MCF 10A (cell line): ENCODE measurements at regions of chr5 and their contacts with region 1.

Region 1: GRCh38 chr5:2685651-2686272 is 65.7 kb downstream of the IRX2 start:
- DNase-seq: peak; percentile 96
- H3K4me3 Mint-ChIP-seq: peak overlapping the region; percentile 57
- H3K27ac Mint-ChIP-seq: peak overlapping the region; percentile 92
- H3K4me1 Mint-ChIP-seq: peaks cover 51% of the 10 kb centered on the region
- H3K27me3 Mint-ChIP-seq: no peaks in the 10 kb centered on the region
- CTCF ChIP-seq: no peak

Region 2: DNA sequence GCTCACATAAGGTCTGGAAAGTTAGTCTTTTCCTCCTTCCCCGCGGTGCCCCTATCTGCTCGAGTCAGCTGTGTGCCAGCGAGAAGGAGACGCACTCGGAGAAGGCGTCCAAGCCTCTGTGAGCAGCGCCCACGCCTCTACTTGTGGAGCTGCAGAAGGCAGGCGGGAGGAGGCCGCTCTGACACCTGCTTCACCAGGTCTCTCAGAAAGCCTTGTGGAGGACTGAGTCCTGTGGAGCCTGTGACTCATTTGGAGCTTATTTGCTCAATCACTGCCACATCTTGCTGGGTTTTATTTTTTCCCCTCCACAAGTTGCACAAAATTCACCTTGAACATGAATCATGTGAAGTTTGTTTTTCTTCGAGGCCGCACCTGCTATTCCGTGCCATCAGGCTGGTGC is 51.8 kb before region 1 on chr5:
- CTCF ChIA-PET with region 1: no interaction called
- POLR2A ChIA-PET with region 1: interaction called, 10 read pairs
- intact Hi-C with region 1: no loop called
- DNase-seq: peak; percentile 80
- H3K4me3 Mint-ChIP-seq: no peak overlapping the region
- H3K27ac Mint-ChIP-seq: no peak overlapping the region
- H3K4me1 Mint-ChIP-seq: no peaks in the 10 kb centered on the region
- H3K27me3 Mint-ChIP-seq: peaks cover 14% of the 10 kb centered on the region
- CTCF ChIP-seq: no peak

Region 3: GRCh38 chr5:2670946-2671345 is 14.8 kb before region 1 on chr5:
- CTCF ChIA-PET with region 1: no interaction called
- POLR2A ChIA-PET with region 1: interaction called, 19 read pairs
- intact Hi-C with region 1: no loop called
- DNase-seq: peak; percentile 81
- H3K4me3 Mint-ChIP-seq: no peak overlapping the region
- H3K27ac Mint-ChIP-seq: peak overlapping the region; percentile 67
- H3K4me1 Mint-ChIP-seq: peaks cover 4% of the 10 kb centered on the region
- H3K27me3 Mint-ChIP-seq: no peaks in the 10 kb centered on the region
- CTCF ChIP-seq: no peak

Region 4: GRCh38 chr5:2739360-2740050 is 53.7 kb after region 1 on chr5:
- CTCF ChIA-PET with region 1: interaction called, 3 read pairs
- POLR2A ChIA-PET with region 1: interaction called, 12 read pairs
- intact Hi-C with region 1: no loop called
- DNase-seq: peak; percentile 27
- H3K4me3 Mint-ChIP-seq: peak overlapping the region; percentile 45
- H3K27ac Mint-ChIP-seq: no peak overlapping the region
- H3K4me1 Mint-ChIP-seq: peaks cover 19% of the 10 kb centered on the region
- H3K27me3 Mint-ChIP-seq: no peaks in the 10 kb centered on the region
- CTCF ChIP-seq: no peak